CD8-positive, alpha-beta T cell (primary cell): ENCODE measurements at regions of chr3 and their contacts with region 1.

Region 1: GRCh38 chr3:69161587-69162307 is 39.4 kb upstream of the LMOD3 start:
- DNase-seq: peak in 7 of 9 experiments; percentile 4 to 68 (median 20)
- ATAC-seq: peak; percentile 83
- H3K4me3 ChIP-seq: no peak overlapping the region
- H3K4me3 Mint-ChIP-seq: no peak overlapping the region
- H3K27ac ChIP-seq: no peak overlapping the region
- H3K27ac Mint-ChIP-seq: no peak overlapping the region
- H3K4me1 ChIP-seq: no peaks in the 10 kb centered on the region
- H3K4me1 Mint-ChIP-seq: no peaks in the 10 kb centered on the region
- H3K27me3 ChIP-seq: no peaks in the 10 kb centered on the region
- H3K27me3 Mint-ChIP-seq: peaks cover 5% of the 10 kb centered on the region
- CTCF ChIP-seq: peak; percentile 99

Region 2: GRCh38 chr3:69144631-69145245 is 17.0 kb before region 1 on chr3:
- CTCF ChIA-PET with region 1: interaction called, 16 read pairs
- POLR2A ChIA-PET with region 1: no interaction called
- intact Hi-C with region 1: no loop called
- DNase-seq: no peak
- ATAC-seq: no peak
- H3K4me3 ChIP-seq: no peak overlapping the region
- H3K4me3 Mint-ChIP-seq: no peak overlapping the region
- H3K27ac ChIP-seq: no peak overlapping the region
- H3K27ac Mint-ChIP-seq: no peak overlapping the region
- H3K4me1 ChIP-seq: no peaks in the 10 kb centered on the region
- H3K4me1 Mint-ChIP-seq: no peaks in the 10 kb centered on the region
- H3K27me3 ChIP-seq: no peaks in the 10 kb centered on the region
- H3K27me3 Mint-ChIP-seq: no peaks in the 10 kb centered on the region
- CTCF ChIP-seq: no peak

Region 3: GRCh38 chr3:69194431-69195165 is 32.9 kb after region 1 on chr3:
- CTCF ChIA-PET with region 1: interaction called, 12 read pairs
- POLR2A ChIA-PET with region 1: no interaction called
- intact Hi-C with region 1: no loop called
- DNase-seq: no peak
- ATAC-seq: no peak
- H3K4me3 ChIP-seq: no peak overlapping the region
- H3K4me3 Mint-ChIP-seq: no peak overlapping the region
- H3K27ac ChIP-seq: no peak overlapping the region
- H3K27ac Mint-ChIP-seq: no peak overlapping the region
- H3K4me1 ChIP-seq: peaks cover 17% of the 10 kb centered on the region
- H3K4me1 Mint-ChIP-seq: peaks cover 28% of the 10 kb centered on the region
- H3K27me3 ChIP-seq: no peaks in the 10 kb centered on the region
- H3K27me3 Mint-ChIP-seq: no peaks in the 10 kb centered on the region
- CTCF ChIP-seq: no peak

Region 4: GRCh38 chr3:69299361-69299760 is 137.6 kb after region 1 on chr3:
- CTCF ChIA-PET with region 1: interaction called, 316 read pairs
- POLR2A ChIA-PET with region 1: no interaction called
- intact Hi-C with region 1: no loop called
- DNase-seq: no peak
- ATAC-seq: no peak
- H3K4me3 ChIP-seq: no peak overlapping the region
- H3K4me3 Mint-ChIP-seq: no peak overlapping the region
- H3K27ac ChIP-seq: no peak overlapping the region
- H3K27ac Mint-ChIP-seq: no peak overlapping the region
- H3K4me1 ChIP-seq: no peaks in the 10 kb centered on the region
- H3K4me1 Mint-ChIP-seq: no peaks in the 10 kb centered on the region
- H3K27me3 ChIP-seq: no peaks in the 10 kb centered on the region
- H3K27me3 Mint-ChIP-seq: no peaks in the 10 kb centered on the region
- CTCF ChIP-seq: no peak

Region 5: GRCh38 chr3:69425261-69425660 is 263.5 kb after region 1 on chr3:
- CTCF ChIA-PET with region 1: interaction called, 4 read pairs
- POLR2A ChIA-PET with region 1: no interaction called
- intact Hi-C with region 1: loop called in 1 of 2 experiments (anchors 1 kb)
- DNase-seq: peak in 3 of 9 experiments; percentile 12 to 45 (median 37)
- ATAC-seq: no peak
- H3K4me3 ChIP-seq: no peak overlapping the region
- H3K4me3 Mint-ChIP-seq: no peak overlapping the region
- H3K27ac ChIP-seq: no peak overlapping the region
- H3K27ac Mint-ChIP-seq: no peak overlapping the region
- H3K4me1 ChIP-seq: no peaks in the 10 kb centered on the region
- H3K4me1 Mint-ChIP-seq: no peaks in the 10 kb centered on the region
- H3K27me3 ChIP-seq: no peaks in the 10 kb centered on the region
- H3K27me3 Mint-ChIP-seq: peaks cover 3% of the 10 kb centered on the region
- CTCF ChIP-seq: peak; percentile 38

Region 6: DNA sequence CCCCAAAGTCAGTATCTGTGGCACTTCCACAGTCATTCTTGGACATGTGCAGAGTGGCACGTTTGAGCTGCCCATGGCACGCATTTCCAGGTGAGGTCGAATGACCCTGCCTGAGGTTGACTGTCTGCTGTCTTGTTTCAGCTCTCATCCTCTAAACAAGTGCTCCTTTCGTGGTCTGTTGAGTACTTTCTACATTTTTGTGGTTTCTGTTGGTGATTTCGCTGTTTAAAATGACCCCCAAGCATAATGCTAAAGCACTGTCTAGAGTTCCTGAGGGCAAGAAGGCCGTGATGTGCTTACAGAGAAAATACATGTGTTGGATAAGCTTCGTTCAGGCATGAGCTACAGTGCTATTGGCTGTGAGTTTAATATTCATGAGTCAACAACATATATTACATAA is 797.8 kb after region 1 on chr3:
- CTCF ChIA-PET with region 1: no interaction called
- POLR2A ChIA-PET with region 1: no interaction called
- intact Hi-C with region 1: loop called in 1 of 2 experiments (anchors 10 kb)
- DNase-seq: no peak
- ATAC-seq: no peak
- H3K4me3 ChIP-seq: no peak overlapping the region
- H3K4me3 Mint-ChIP-seq: no peak overlapping the region
- H3K27ac ChIP-seq: no peak overlapping the region
- H3K27ac Mint-ChIP-seq: no peak overlapping the region
- H3K4me1 ChIP-seq: no peaks in the 10 kb centered on the region
- H3K4me1 Mint-ChIP-seq: no peaks in the 10 kb centered on the region
- H3K27me3 ChIP-seq: no peaks in the 10 kb centered on the region
- H3K27me3 Mint-ChIP-seq: no peaks in the 10 kb centered on the region
- CTCF ChIP-seq: no peak